ENCODE measurements at regions of chr18 and their contacts with region 1.

Region 1: GRCh38 chr18:63131106-63131958 is 188.2 kb downstream of the BCL2 start:
- DNase-seq: peak in 2 of 5 donors; percentile 50 to 53
- ATAC-seq: peak; percentile 54 to 68 (median 58)
- H3K4me3 ChIP-seq: no peak overlapping the region
- H3K27ac ChIP-seq: peak overlapping the region in 1 of 12 donors; percentile 36
- H3K4me1 ChIP-seq: peaks cover 0 to 15% (median 8%) of the 10 kb centered on the region in 12 donors
- H3K27me3 ChIP-seq: no peaks in the 10 kb centered on the region
- CTCF ChIP-seq: peak; percentile 51 to 82 (median 72)
- POLR2A ChIP-seq: no peak

Region 2: DNA sequence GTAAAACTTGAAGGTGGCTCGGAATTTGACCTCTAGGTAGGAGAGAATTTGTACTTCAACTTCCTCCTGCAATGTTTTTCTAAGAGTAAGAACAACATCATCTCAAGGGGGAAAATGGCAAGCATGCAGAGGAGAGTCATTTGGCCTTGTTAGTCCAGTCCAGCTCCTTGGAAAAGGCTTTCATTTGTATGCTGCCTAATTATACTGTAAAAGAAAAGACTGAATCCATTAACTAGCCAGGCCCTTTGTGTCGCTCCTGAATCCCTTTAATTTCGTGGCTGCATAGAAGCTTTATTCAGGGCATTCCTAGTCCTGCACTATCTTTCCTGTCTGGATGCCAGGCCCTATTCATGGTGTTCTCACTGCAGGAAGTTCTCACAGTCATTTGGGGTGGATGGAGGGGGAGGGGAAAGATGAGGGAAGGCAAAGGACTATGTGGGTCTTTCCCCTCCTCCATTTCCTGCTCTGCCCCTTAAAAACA is 380.0 kb before region 1 on chr18:
- intact Hi-C with region 1: no loop called
- DNase-seq: peak in 4 of 5 donors; percentile 41 to 57 (median 47)
- ATAC-seq: peak; percentile 81 to 86 (median 82)
- H3K4me3 ChIP-seq: peak overlapping the region in 1 of 12 donors; percentile 19
- H3K27ac ChIP-seq: peak overlapping the region in 3 of 12 donors; percentile 20 to 40 (median 23)
- H3K4me1 ChIP-seq: peaks cover 0 to 28% (median 22%) of the 10 kb centered on the region in 12 donors
- H3K27me3 ChIP-seq: no peaks in the 10 kb centered on the region
- CTCF ChIP-seq: no peak
- POLR2A ChIP-seq: no peak

Region 3: GRCh38 chr18:62925031-62925688 is 206.2 kb before region 1 on chr18:
- intact Hi-C with region 1: no loop called
- DNase-seq: no peak
- ATAC-seq: no peak
- H3K4me3 ChIP-seq: no peak overlapping the region
- H3K27ac ChIP-seq: no peak overlapping the region
- H3K4me1 ChIP-seq: no peaks in the 10 kb centered on the region
- H3K27me3 ChIP-seq: no peaks in the 10 kb centered on the region
- CTCF ChIP-seq: no peak
- POLR2A ChIP-seq: no peak

Region 4: DNA sequence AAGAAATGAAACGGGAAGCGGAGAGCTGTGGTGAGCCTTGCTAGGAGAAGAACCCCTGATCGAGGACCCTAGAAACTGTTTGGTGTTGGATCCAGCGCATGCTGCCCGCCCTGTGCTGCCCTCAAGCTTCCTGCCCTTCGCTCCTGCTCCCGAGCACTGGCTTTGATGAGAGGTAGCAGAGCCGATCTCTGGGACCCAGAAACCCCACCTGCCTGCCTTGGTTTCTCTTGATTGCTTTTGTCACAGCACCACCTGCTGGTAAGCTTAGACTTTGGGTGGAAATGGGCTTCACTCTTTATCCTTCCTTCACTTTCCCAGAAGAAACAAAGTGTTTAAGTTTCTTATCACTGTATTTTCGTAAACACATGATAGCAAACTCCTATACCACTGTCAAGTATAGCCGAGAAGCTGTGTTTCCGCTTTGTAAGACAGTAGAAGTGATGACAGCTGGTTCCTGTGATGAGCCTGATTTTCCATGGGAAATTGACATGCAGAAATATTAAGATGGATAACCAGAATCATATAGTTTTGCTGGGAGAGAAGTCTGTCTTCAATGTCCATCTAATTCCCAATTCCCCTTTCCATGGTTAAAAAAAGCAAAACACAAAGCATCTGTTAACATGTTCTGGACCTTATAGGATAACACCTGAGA is 148.6 kb before region 1 on chr18:
- intact Hi-C with region 1: no loop called
- DNase-seq: peak in 3 of 5 donors; percentile 45 to 60 (median 56)
- ATAC-seq: peak; percentile 32 to 82 (median 66)
- H3K4me3 ChIP-seq: peak overlapping the region in 9 of 12 donors; percentile 21 to 57 (median 44)
- H3K27ac ChIP-seq: no peak overlapping the region
- H3K4me1 ChIP-seq: peaks cover 0 to 11% (median 3%) of the 10 kb centered on the region in 12 donors
- H3K27me3 ChIP-seq: no peaks in the 10 kb centered on the region
- CTCF ChIP-seq: peak; percentile 64 to 87 (median 78)
- POLR2A ChIP-seq: no peak

Region 5: GRCh38 chr18:63025251-63026090 is 105.9 kb before region 1 on chr18:
- intact Hi-C with region 1: loop called in 1 of 10 experiments (anchors 10 kb)
- DNase-seq: peak in 2 of 5 donors; percentile 35 to 46
- ATAC-seq: peak in 3 of 4 donors; percentile 75 to 87 (median 82)
- H3K4me3 ChIP-seq: no peak overlapping the region
- H3K27ac ChIP-seq: no peak overlapping the region
- H3K4me1 ChIP-seq: no peaks in the 10 kb centered on the region
- H3K27me3 ChIP-seq: no peaks in the 10 kb centered on the region
- CTCF ChIP-seq: peak in 11 of 12 donors; percentile 19 to 55 (median 43)
- POLR2A ChIP-seq: no peak

Region 6: DNA sequence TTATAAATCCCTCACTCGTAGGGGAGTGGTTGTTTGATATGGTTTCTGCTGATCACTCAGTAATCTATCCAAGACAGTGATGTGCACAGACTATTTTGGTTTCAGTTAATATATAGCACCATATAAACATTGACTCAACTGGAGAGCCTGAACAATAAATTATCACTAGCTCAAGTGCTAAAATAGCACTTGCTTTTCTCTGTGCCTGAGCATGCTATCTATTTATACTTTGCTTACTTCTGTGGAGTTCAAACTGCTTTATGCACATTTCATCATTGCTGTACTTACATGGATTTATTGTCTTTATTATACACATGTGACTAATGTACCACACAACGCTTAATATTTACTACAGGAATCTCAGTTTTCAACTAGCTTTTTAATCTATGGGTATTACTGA is 54.7 kb after region 1 on chr18:
- intact Hi-C with region 1: loop called in 1 of 10 experiments (anchors 2 kb)
- DNase-seq: no peak
- ATAC-seq: peak in 3 of 4 donors; percentile 18 to 38 (median 33)
- H3K4me3 ChIP-seq: no peak overlapping the region
- H3K27ac ChIP-seq: peak overlapping the region in 10 of 12 donors; percentile 0 to 69 (median 56)
- H3K4me1 ChIP-seq: peaks cover 0 to 51% (median 22%) of the 10 kb centered on the region in 12 donors
- H3K27me3 ChIP-seq: no peaks in the 10 kb centered on the region
- CTCF ChIP-seq: no peak
- POLR2A ChIP-seq: no peak

Region 7: DNA sequence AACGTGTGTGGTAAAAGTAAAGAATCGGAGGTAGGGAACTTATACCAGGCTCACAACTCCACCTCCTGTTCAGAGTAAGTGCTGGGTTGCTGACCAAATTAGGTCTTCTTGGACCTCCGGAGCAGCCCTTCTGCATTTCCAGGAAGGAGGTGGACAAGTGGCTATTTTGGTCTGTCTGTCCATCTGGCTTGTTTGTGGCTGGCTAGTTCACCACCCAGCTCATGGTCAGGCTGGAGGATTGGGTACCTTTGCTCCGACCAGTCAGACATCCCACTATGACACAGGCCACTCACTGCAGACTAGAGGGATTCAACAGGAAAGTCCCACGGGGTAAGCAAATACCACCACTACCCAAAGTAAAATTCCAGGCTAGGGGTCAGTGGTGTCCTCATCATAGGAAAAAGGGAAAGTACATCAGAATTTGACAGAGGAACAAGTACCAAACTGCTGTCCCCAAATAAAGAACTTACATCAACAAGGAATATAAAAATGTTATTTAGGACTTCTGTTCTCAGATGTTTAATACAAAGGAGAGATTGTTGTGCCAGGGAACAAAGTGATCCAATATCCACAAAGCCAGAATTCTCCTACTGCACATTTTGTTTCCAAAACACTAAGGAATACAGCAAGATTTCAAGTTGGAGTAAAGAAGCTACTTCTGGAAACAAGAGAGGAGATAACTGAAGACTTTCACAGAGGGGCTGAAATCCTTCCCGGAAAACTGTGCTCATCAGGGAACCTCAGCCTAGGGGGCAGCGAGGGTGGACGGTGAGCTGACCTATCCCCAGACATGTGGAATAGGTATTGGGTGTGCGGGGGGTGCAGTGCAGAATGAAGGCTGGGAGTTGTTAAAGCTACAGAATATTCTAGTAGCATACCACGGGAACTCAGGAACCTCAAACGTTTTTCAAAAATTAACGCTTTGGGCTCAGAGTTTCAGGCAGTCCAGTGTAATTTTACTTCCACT is 131.3 kb after region 1 on chr18:
- intact Hi-C with region 1: loop called in 4 of 10 experiments (anchors 2 to 10 kb)
- DNase-seq: peak in 3 of 5 donors; percentile 25 to 47 (median 33)
- ATAC-seq: peak; percentile 61 to 85 (median 83)
- H3K4me3 ChIP-seq: no peak overlapping the region
- H3K27ac ChIP-seq: peak overlapping the region in 11 of 12 donors; percentile 1 to 74 (median 52)
- H3K4me1 ChIP-seq: peaks cover 0 to 21% (median 10%) of the 10 kb centered on the region in 12 donors
- H3K27me3 ChIP-seq: no peaks in the 10 kb centered on the region
- CTCF ChIP-seq: peak in 6 of 12 donors; percentile 9 to 51 (median 23)
- POLR2A ChIP-seq: no peak

Region 8: GRCh38 chr18:63329431-63330145 is 198.3 kb after region 1 on chr18:
- intact Hi-C with region 1: loop called in 2 of 10 experiments (anchors 5 kb)
- DNase-seq: no peak
- ATAC-seq: no peak
- H3K4me3 ChIP-seq: no peak overlapping the region
- H3K27ac ChIP-seq: no peak overlapping the region
- H3K4me1 ChIP-seq: no peaks in the 10 kb centered on the region
- H3K27me3 ChIP-seq: no peaks in the 10 kb centered on the region
- CTCF ChIP-seq: no peak
- POLR2A ChIP-seq: no peak

Region 9: DNA sequence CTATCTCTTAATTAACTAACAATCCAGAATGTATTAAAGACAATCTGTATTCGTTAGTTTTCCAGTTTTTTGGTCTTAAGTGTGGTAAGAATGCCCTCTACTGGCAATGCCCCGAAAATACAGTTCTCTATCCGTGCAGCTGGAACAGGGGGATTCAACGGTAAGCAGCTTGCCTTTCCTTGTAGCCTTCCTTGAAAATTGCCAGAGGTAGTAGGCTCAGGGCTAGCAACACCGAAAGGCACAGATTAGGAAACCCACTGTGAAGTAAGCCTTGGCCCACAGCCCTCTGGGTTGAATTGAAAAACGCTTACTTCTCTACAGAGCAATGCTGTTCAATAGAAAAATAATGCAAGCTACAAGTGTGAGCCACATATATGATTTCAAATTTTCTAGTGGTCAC is 308.0 kb after region 1 on chr18:
- intact Hi-C with region 1: loop called in 6 of 10 experiments (anchors 5 to 10 kb)
- DNase-seq: peak in 1 of 5 donors; percentile 32
- ATAC-seq: peak; percentile 33 to 76 (median 63)
- H3K4me3 ChIP-seq: no peak overlapping the region
- H3K27ac ChIP-seq: no peak overlapping the region
- H3K4me1 ChIP-seq: peaks cover 0 to 9% (median 0%) of the 10 kb centered on the region in 12 donors
- H3K27me3 ChIP-seq: no peaks in the 10 kb centered on the region
- CTCF ChIP-seq: peak; percentile 57 to 85 (median 78)
- POLR2A ChIP-seq: no peak

Region 10: DNA sequence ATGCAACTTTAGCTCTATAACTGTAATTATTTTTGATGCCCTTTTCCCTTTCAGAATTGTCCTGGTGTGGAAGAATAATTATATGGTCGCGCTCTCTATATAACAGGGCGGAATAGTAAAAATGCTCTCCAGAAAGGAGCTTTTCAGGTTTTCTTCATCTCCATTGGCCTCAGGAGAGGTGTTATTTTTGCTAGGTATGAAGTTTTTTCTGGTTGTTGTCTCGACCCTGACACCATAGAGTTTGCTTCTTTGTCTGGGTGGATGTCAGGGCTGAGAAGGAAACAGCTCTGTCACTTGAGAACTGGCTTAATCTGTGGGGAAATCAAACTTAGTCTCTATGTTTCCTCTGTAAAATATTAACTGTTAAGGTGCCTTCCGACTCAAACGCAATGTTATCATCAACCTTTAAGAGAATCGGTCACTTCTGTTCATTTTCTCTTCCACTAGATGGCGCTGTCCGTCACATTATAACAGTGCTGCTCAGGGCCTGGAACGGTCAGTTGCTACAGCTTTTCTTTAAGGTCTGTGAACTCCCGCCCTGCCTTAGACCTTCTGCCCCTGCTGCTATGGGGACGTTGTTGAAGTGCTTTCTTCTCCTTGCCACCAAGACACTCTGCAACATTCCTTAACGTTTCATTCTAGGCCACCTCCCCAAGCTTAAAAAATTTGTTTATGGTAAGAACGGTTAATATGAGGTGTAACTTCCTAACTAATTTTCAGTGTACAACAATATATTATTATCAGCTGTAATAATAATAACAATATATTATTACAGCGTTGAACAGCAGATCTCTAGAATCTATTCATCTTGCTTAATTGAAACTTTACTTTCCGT is 387.1 kb after region 1 on chr18:
- intact Hi-C with region 1: no loop called
- DNase-seq: peak in 4 of 5 donors; percentile 36 to 51 (median 42)
- ATAC-seq: peak in 3 of 4 donors; percentile 77 to 81 (median 81)
- H3K4me3 ChIP-seq: no peak overlapping the region
- H3K27ac ChIP-seq: no peak overlapping the region
- H3K4me1 ChIP-seq: no peaks in the 10 kb centered on the region
- H3K27me3 ChIP-seq: peaks cover 0 to 14% (median 0%) of the 10 kb centered on the region in 9 donors
- CTCF ChIP-seq: peak; percentile 55 to 86 (median 76)
- POLR2A ChIP-seq: no peak

Measured in heart left ventricle (tissue), 16 donors.